A549 (cell line): ENCODE measurements at regions of chr17 and their contacts with region 1.

Region 1: DNA sequence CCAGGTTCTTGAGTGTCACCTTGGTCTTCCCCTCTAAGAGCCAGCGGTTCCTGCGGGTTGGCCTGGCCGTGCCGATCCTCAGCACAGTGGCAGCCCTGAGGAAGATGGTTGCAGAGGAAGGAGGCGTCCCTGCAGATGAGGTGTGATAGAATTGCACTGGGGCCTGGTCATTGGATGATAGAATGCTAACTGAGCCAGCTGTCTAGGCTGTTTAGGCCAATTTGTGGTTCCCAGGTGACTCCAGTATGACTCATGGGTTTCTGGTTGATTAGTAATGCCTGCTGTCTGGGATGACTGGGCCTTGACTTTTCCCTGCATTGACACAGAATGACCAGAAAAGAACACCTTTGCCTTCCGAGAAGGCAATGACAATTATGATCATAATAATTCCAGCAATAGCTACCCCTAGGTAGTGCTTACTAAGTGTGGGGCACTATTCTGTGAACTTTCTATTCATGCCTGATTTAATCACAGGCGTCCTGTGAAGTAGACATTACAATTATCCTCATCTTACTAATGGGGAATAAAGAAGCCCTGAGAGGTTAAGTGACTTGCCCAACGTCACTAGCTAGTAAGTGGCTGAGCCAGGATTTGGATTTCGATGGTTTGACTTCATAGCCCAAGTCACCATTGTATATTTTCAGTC is 31.5 kb downstream of the USP43 start:
- DNase-seq: peak; percentile 69 to 84
- ATAC-seq: peak; percentile 93 to 96
- H3K4me3 ChIP-seq: no peak overlapping the region
- H3K27ac ChIP-seq: peak overlapping the region; percentile 44 to 57; a peak in 5 of 6 replicates
- H3K4me1 ChIP-seq: peaks cover 17% of the 10 kb centered on the region
- CTCF ChIP-seq: no peak
- EP300 ChIP-seq: no peak
- POLR2A ChIP-seq: no peak
- RAD21 ChIP-seq: no peak

Region 2: GRCh38 chr17:9644910-9645751 is 31.7 kb before region 1 on chr17 and contains the start of gene USP43:
- CTCF ChIA-PET with region 1: interaction called, 10 read pairs
- POLR2A ChIA-PET with region 1: interaction called, 4 read pairs
- DNase-seq: peak; percentile 47 to 72
- ATAC-seq: peak; percentile 73 to 82
- H3K4me3 ChIP-seq: peak within 1 kb of the TSS; percentile 77
- H3K27ac ChIP-seq: peak within 1 kb of the TSS; percentile 77 to 96
- H3K4me1 ChIP-seq: peaks cover 37% of the 10 kb centered on the region
- CTCF ChIP-seq: no peak; the same call in 2 of the 3 replicates
- EP300 ChIP-seq: no peak
- POLR2A ChIP-seq: peak; percentile 48
- RAD21 ChIP-seq: no peak
- polyA plus RNA-seq, gene USP43: 3.4 and 4.9 TPM in 2 replicates

Region 3: DNA sequence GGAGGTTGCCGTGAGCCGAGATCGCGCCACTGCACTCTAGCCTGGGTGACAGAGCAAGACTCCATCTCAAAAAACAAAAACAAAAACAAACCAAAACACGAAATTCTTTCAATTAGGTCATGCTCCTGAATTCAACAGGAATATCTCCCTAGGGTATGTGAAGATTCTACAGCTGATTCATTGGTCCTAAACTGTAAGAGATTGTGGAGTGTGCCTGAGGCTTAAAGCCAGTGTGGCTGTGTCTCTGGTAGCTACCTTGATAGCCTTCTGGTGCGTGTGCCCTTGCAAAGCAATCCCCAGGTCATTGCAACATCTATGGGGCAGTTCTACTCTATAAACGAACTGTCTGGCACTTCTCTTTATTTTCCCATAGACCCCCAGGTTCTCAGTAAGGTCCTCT is 16.9 kb after region 1 on chr17:
- CTCF ChIA-PET with region 1: no interaction called
- POLR2A ChIA-PET with region 1: no interaction called
- DNase-seq: no peak
- ATAC-seq: no peak
- H3K4me3 ChIP-seq: no peak overlapping the region
- H3K27ac ChIP-seq: no peak overlapping the region
- H3K4me1 ChIP-seq: no peaks in the 10 kb centered on the region
- CTCF ChIP-seq: no peak
- EP300 ChIP-seq: no peak
- POLR2A ChIP-seq: no peak
- RAD21 ChIP-seq: no peak